GM10248 (cell line): ENCODE measurements at regions of chr1 and their contacts with region 1.

Region 1: DNA sequence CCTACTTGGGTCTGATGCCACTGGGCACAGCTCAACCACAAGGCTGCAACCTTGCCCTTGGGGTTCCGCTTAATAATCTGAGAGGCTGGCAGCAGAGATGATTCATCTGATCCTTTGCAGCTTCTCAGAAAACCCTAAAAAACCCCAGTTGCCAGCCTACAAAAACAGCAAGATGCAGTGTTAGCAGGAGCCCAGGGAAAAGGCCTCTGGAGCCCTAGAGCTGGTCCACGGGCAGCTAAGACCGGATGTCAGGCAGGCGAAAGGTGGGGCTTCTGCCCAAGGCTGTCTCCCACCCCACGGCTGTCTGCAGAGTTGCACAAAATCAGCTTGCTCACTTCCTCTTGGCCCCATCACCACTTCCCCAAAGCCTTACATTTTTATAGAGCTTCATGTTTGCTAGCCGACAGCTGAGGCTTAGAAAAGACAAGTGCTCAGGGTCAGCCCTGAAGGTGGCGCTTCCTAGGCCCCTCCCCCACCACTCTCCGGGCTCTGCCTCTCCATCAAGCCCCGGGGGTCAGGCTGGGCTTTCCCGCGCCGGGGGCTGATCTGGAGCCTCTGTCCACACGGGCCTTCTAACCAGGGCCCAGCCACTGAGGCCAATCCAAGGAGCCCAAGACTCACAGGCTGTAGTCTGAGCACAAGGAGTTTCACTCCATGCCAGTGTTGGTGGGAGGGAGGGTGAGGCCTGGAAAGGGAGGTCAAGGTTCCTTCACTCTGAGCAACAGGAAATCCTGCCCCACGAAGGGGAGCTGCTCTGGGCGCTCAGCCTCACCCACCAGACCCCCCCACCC is 4.2 kb upstream of the ADORA3 start:
- DNase-seq: peak; percentile 73
- CTCF ChIP-seq: no peak

Region 2: GRCh38 chr1:111417755-111418154 is 89.9 kb before region 1 on chr1:
- CTCF ChIA-PET with region 1: no interaction called
- POLR2A ChIA-PET with region 1: no interaction called
- DNase-seq: no peak
- CTCF ChIP-seq: no peak

Region 3: GRCh38 chr1:111481387-111482221 is 26.0 kb before region 1 on chr1:
- CTCF ChIA-PET with region 1: interaction called, 46 read pairs
- POLR2A ChIA-PET with region 1: no interaction called
- DNase-seq: peak; percentile 74
- CTCF ChIP-seq: peak; percentile 88

Region 4: GRCh38 chr1:111556325-111557037 is 48.9 kb after region 1 on chr1:
- CTCF ChIA-PET with region 1: interaction called, 14 read pairs
- POLR2A ChIA-PET with region 1: no interaction called
- DNase-seq: no peak
- CTCF ChIP-seq: no peak

Region 5: DNA sequence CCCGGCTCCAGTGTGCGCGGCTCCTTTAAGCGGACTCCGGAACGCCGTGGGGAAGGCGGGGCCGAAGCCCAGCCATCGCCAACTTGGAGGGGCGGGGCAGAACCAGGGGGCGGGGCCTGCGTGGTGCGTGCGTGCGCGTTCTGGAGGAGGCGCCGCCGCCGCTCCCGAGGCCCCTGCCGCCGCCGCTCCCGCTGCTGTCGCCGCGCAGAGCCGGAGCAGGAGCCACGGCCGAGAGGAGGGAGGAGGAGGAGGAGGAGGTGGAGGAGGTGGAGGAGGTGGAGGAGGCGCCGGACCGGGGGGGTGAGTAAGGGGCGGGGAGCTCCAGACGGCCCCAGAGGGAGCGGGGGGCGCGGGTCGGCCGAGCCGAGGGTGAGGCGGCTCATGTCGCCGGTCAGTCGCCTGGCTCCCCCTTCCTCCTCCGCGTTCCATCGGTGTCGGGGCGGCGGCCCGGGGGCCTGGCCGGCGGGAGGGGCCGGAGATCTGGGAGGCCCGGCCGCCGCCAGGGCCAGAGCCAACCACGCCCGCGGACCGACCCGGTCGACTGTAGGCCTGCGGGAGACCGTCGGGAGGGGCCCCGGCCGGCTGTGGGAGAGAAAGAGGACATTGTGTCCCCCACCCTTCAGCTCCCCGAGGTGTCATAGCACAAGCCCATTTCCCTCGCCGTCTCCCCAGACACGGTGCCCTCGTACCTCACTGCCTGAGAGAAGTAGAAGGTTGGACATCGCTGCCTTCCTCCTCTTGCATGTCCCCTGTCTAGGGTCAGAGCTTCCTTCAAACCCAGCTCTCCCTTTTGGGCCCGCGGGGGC is 112.2 kb after region 1 on chr1 and contains the start of gene RAP1A:
- CTCF ChIA-PET with region 1: interaction called, 47 read pairs
- POLR2A ChIA-PET with region 1: no interaction called
- DNase-seq: peak; percentile 95
- CTCF ChIP-seq: no peak

Region 6: DNA sequence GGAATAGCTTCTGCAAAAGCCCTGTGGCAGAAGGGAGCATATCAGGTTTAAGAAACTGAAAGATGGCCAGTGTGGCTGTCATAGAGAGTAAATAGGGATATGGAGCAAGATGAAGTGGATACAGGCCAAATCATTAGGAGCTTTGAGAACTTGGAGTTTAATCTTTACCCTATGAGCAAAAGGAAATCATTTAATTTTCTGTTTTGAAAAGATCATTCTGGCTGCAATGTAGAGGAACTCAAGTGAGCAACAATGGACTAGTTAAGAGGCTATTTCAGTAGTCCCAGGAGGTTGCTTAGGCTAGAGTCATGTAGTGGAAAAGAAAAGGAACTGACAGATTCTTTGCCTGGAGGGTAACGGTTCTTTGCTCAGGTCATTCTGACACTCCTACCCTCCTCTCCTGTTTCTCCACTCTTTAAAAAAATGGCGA is 159.2 kb after region 1 on chr1:
- CTCF ChIA-PET with region 1: interaction called, 15 read pairs
- POLR2A ChIA-PET with region 1: no interaction called
- DNase-seq: no peak
- CTCF ChIP-seq: no peak

Region 7: DNA sequence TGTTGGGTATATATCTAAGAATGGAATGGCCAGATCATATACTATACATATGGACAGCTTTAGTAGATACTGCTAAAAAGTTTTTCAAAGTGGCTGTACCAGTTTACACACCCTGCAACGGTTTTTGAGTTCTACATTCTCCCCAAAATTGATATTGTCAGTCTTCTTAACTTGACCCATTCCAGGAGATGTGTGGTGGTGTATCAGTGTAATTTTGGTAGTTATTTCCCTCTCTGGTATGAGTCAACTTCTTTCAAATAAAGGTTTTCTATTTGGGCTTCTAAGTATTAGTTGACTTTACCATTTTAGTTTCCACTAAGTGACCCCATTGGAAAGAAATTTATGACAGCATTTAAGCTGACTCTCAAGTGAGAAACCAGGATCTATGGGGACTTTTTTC is 202.4 kb after region 1 on chr1:
- CTCF ChIA-PET with region 1: interaction called, 24 read pairs
- POLR2A ChIA-PET with region 1: no interaction called
- DNase-seq: no peak
- CTCF ChIP-seq: no peak

Region 8: DNA sequence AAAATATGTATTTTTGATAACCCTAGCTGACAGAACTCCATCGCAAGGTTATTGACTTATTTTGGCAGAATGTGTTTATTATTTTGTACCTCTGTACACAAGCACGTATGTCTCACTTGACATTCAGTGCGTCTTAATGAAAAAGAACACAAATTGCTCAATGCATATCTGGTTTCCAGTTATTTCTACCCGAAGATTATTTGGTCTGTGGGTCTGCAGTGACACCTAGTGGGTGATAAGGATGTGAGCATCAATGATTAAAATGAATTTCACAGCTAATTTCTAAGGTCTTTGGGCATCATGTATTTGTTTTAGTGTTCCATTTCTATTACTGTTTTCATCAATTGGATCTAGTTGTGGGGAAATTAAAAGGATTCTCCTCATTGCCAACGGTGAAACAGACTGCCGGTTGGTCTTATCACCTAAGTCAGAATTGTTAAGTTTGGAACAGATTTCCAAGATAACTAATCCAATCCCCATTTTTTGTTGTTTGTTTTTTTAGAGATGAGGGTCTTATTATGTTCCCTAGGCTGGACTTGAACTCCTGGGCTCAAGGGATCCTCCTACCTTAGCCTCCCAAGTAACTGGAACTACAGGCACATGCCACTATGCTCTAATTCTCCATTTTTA is 262.0 kb after region 1 on chr1:
- CTCF ChIA-PET with region 1: interaction called, 10 read pairs
- POLR2A ChIA-PET with region 1: no interaction called
- DNase-seq: peak; percentile 53
- CTCF ChIP-seq: peak; percentile 78